CD8-positive, alpha-beta memory T cell (primary cell): ENCODE measurements at regions of chr2 and their contacts with region 1.

Region 1: DNA sequence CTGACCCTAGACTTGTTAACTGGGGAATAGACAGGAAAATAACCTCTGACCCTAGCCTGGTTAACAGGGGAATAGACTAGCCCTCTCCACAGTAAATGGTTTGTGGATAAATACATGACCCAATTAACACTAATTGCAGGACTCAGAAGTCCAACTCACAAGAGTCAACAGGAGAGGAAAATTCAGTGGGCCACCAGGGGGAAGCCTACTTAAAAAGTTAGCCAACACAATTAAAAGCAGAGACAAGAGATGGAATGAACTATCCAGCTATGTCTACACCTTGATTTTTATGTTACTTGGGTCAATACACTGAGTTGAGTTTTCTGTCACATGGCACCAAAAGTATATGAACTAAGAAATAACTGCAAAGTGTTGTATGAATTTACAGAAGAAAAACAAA is 158.8 kb upstream of the SLC39A10 start:
- DNase-seq: peak; percentile 35 to 78 (median 53)
- H3K4me3 ChIP-seq: no peak overlapping the region
- H3K4me3 Mint-ChIP-seq: no peak overlapping the region
- H3K27ac ChIP-seq: no peak overlapping the region
- H3K27ac Mint-ChIP-seq: peak overlapping the region in 3 of 8 donors; percentile 17 to 66 (median 54)
- H3K4me1 ChIP-seq: peaks cover 15% of the 10 kb centered on the region
- H3K4me1 Mint-ChIP-seq: peaks cover 18 to 52% (median 37%) of the 10 kb centered on the region in 3 donors
- H3K27me3 ChIP-seq: no peaks in the 10 kb centered on the region
- H3K27me3 Mint-ChIP-seq: peaks cover 0 to 1% of the 10 kb centered on the region in 2 donors

Region 2: GRCh38 chr2:195520671-195521155 is 22.5 kb after region 1 on chr2:
- CTCF ChIA-PET with region 1: interaction called, 10 read pairs
- POLR2A ChIA-PET with region 1: no interaction called
- DNase-seq: no peak
- H3K4me3 ChIP-seq: no peak overlapping the region
- H3K4me3 Mint-ChIP-seq: no peak overlapping the region
- H3K27ac ChIP-seq: no peak overlapping the region
- H3K27ac Mint-ChIP-seq: peak overlapping the region in 1 of 8 donors; percentile 52
- H3K4me1 ChIP-seq: no peaks in the 10 kb centered on the region
- H3K4me1 Mint-ChIP-seq: peaks cover 3 to 31% (median 18%) of the 10 kb centered on the region in 3 donors
- H3K27me3 ChIP-seq: no peaks in the 10 kb centered on the region
- H3K27me3 Mint-ChIP-seq: no peaks in the 10 kb centered on the region

Region 3: DNA sequence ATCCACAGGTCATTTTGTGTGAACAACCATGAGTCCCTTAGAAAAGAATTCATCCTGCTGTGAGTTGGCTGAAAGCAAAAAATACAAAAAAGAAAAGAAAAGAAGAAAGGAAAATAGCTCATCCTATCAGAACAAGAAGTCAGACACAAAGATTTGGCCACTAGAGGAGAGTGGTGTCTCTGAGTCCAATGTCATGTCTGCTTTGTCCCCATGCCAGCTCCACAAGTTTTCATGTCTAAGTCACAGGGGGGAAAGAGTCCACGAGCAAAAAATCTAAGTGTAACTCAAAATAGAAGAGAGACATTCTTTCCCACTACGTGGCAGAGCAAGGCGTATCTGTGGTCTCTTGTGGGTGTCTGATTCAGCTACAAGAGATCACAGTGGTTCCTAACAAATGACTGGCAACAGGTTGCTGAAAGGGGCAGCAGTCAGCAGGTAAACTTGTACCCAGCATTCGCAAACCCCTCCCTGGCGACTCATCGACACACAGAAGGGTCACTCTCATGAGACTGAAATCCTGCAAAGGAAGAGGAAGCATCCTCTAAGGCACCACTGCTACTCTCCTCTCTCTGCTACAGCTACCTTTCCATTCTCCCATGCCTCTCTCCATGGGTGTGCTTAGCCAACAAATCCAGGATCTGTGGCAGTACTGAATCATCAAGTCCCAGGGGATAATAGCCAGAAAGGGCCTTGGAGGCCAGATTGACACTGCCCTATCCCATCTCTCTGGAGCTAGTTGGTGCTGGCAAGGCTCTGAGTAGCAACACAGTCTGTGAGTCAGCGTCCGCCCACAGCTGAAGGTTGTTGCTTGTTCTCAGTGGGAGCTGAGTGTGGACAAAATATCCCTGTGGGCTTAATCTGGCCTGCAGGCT is 35.8 kb after region 1 on chr2:
- CTCF ChIA-PET with region 1: interaction called, 15 read pairs
- POLR2A ChIA-PET with region 1: interaction called, 4 read pairs
- DNase-seq: peak; percentile 10 to 72 (median 43)
- H3K4me3 ChIP-seq: peak overlapping the region; percentile 65
- H3K4me3 Mint-ChIP-seq: peak overlapping the region; percentile 75 to 86 (median 79)
- H3K27ac ChIP-seq: peak overlapping the region; percentile 19
- H3K27ac Mint-ChIP-seq: peak overlapping the region; percentile 83 to 97 (median 92)
- H3K4me1 ChIP-seq: peaks cover 78% of the 10 kb centered on the region
- H3K4me1 Mint-ChIP-seq: peaks cover 83 to 89% (median 89%) of the 10 kb centered on the region in 3 donors
- H3K27me3 ChIP-seq: no peaks in the 10 kb centered on the region
- H3K27me3 Mint-ChIP-seq: no peaks in the 10 kb centered on the region

Region 4: GRCh38 chr2:195559431-195559914 is 61.3 kb after region 1 on chr2:
- CTCF ChIA-PET with region 1: interaction called, 22 read pairs
- POLR2A ChIA-PET with region 1: interaction called, 3 read pairs
- DNase-seq: peak; percentile 46 to 87 (median 84)
- H3K4me3 ChIP-seq: no peak overlapping the region
- H3K4me3 Mint-ChIP-seq: peak overlapping the region; percentile 38 to 84 (median 73)
- H3K27ac ChIP-seq: peak overlapping the region; percentile 15
- H3K27ac Mint-ChIP-seq: peak overlapping the region; percentile 69 to 97 (median 94)
- H3K4me1 ChIP-seq: peaks cover 77% of the 10 kb centered on the region
- H3K4me1 Mint-ChIP-seq: peaks cover 62 to 79% (median 78%) of the 10 kb centered on the region in 3 donors
- H3K27me3 ChIP-seq: no peaks in the 10 kb centered on the region
- H3K27me3 Mint-ChIP-seq: no peaks in the 10 kb centered on the region

Region 5: DNA sequence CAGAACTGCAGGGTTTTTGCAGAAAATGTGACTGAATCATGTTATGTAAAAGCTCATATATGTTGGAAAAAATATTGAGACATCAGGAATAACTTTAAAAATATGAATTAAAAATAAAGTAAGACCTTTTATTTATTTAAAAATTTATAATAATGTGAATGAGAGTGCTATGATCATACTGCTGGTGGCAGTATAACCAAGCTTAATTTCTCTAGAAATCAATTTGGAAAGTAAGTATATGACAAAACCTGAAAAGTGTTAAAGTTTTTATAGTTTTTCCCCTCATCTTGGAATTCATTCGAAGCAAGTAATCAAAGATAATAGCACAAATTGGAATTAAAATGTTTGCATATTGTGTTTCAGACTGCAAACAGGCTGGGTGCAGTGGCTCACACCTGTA is 166.4 kb after region 1 on chr2:
- CTCF ChIA-PET with region 1: interaction called, 120 read pairs
- POLR2A ChIA-PET with region 1: interaction called, 18 read pairs
- DNase-seq: no peak
- H3K4me3 ChIP-seq: no peak overlapping the region
- H3K4me3 Mint-ChIP-seq: no peak overlapping the region
- H3K27ac ChIP-seq: no peak overlapping the region
- H3K27ac Mint-ChIP-seq: peak overlapping the region in 7 of 8 donors; percentile 41 to 84 (median 56)
- H3K4me1 ChIP-seq: peaks cover 49% of the 10 kb centered on the region
- H3K4me1 Mint-ChIP-seq: peaks cover 64 to 87% (median 85%) of the 10 kb centered on the region in 3 donors
- H3K27me3 ChIP-seq: no peaks in the 10 kb centered on the region
- H3K27me3 Mint-ChIP-seq: no peaks in the 10 kb centered on the region